AG04449 (cell line): ENCODE measurements at regions of chr6 and their contacts with region 1.

Region 1: GRCh38 chr6:133966654-133967329 is 13.8 kb downstream of the TBPL1 start:
- DNase-seq: no peak
- H3K4me3 ChIP-seq: no peak overlapping the region
- CTCF ChIP-seq: no peak

Region 2: DNA sequence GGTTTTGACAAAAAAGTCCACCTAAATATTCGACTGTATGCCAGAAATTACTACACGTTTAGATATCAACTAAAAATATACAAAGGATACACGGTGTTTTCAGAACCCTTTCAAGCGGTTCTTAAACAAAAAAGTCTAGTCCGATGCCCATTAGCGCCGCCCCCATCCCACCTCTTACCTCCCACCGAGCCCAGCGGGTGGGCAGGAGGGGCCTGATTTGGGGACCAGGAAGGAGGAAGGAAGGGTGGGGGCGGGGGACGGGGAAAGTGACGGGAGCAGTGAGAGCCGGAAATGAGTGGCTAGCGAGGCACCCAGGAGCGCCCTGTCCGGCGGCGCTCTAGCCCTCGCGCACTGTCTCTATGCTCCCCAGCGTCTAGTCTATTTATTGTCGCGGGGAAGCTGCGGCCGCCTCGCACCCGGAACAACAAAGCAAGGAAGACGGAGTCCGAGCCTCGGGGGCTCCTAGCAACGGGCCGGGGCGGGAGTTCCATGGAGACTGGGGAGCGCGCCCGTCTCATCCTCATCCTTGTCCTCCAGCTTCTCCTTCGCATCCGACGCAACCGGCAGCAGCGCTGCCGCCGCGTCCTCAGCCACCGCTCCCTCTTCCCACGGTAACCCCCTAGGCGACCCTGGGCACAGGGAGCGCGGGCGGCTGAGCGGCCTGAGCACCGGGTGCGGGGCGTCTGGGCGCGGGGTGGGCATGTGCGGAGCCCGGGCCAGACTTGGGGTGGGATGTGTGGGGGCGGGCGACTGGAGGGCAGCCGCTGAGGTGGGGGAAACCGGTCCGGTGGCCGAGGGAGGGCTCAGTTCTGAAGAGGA is 13.8 kb before region 1 on chr6 and contains the start of gene TBPL1:
- CTCF ChIA-PET with region 1: interaction called, 32 read pairs
- POLR2A ChIA-PET with region 1: interaction called, 5 read pairs
- DNase-seq: peak; percentile 69
- H3K4me3 ChIP-seq: peak within 1 kb of the TSS; percentile 82
- CTCF ChIP-seq: no peak